ENCODE measurements at regions of chr2 and their contacts with region 1.

Region 1: GRCh38 chr2:16687955-16688354 is 22.3 kb upstream of the CYRIA start:
- DNase-seq: no peak
- ATAC-seq: peak; percentile 76
- H3K4me3 Mint-ChIP-seq: peak overlapping the region; percentile 0
- H3K27ac Mint-ChIP-seq: peak overlapping the region; percentile 60
- H3K4me1 Mint-ChIP-seq: peaks cover 23% of the 10 kb centered on the region
- H3K27me3 Mint-ChIP-seq: no peaks in the 10 kb centered on the region
- CTCF ChIP-seq: no peak

Region 2: GRCh38 chr2:16591370-16591933 is 96.5 kb before region 1 on chr2:
- CTCF ChIA-PET with region 1: no interaction called
- POLR2A ChIA-PET with region 1: no interaction called
- intact Hi-C with region 1: no loop called
- DNase-seq: no peak
- ATAC-seq: peak; percentile 21
- H3K4me3 Mint-ChIP-seq: no peak overlapping the region
- H3K27ac Mint-ChIP-seq: no peak overlapping the region
- H3K4me1 Mint-ChIP-seq: peaks cover 15% of the 10 kb centered on the region
- H3K27me3 Mint-ChIP-seq: no peaks in the 10 kb centered on the region
- CTCF ChIP-seq: no peak

Region 3: DNA sequence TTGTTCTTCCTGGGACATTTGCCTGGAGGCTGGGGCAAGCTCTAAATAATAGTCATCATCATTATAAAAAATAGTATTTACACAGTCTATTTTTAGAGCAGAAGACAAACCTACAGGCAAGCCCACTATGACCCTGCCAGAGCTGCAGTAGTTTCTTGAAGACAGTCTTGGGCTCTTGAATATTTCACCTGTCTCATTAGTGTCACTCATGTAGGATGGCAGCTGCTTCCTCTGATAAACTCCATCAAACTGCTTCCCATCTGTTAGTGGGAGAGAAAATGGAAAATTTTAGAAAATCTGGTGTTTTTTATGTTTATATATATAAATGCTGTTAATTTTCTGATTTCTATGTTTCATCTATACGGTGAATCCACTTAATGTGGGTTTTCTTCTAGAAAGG is 13.8 kb before region 1 on chr2:
- CTCF ChIA-PET with region 1: no interaction called
- POLR2A ChIA-PET with region 1: no interaction called
- intact Hi-C with region 1: loop called (anchors 2 kb)
- DNase-seq: no peak
- ATAC-seq: no peak
- H3K4me3 Mint-ChIP-seq: no peak overlapping the region
- H3K27ac Mint-ChIP-seq: no peak overlapping the region
- H3K4me1 Mint-ChIP-seq: peaks cover 4% of the 10 kb centered on the region
- H3K27me3 Mint-ChIP-seq: no peaks in the 10 kb centered on the region
- CTCF ChIP-seq: no peak

Region 4: DNA sequence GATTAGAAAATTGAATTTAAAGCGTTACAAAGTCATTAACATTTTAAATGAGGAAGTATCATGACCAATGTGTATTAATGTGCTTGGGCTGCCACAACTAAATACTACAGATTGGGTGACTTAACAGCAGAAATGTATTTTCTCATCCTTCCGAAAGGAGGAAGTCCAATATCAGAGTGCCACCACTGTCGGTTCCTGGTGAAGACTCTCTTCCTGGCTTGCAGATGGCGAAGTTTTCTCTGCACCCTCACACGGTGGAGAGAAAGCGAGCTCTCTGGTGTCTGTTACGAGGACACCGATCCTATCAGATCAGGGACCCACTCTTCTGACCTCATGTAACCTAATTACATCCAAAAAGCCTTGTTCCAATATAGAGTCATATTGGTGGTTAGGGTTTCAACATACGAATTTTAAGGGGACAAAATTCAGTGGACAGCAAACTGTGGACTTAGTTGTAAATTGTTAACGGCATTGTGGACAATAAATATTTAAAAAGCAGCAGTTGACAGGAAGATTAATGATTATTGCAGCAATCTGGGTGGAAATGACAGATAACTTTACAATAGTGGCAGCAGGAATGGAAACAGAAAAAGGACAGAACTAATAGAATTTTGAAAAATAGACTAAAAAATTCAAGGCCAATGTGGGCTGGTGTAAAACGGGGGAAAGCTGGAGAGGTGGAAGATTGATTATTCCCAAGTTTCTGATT is 12.8 kb after region 1 on chr2:
- CTCF ChIA-PET with region 1: no interaction called
- POLR2A ChIA-PET with region 1: no interaction called
- intact Hi-C with region 1: loop called (anchors 1 kb)
- DNase-seq: no peak
- ATAC-seq: no peak
- H3K4me3 Mint-ChIP-seq: no peak overlapping the region
- H3K27ac Mint-ChIP-seq: no peak overlapping the region
- H3K4me1 Mint-ChIP-seq: no peaks in the 10 kb centered on the region
- H3K27me3 Mint-ChIP-seq: no peaks in the 10 kb centered on the region
- CTCF ChIP-seq: no peak

Region 5: DNA sequence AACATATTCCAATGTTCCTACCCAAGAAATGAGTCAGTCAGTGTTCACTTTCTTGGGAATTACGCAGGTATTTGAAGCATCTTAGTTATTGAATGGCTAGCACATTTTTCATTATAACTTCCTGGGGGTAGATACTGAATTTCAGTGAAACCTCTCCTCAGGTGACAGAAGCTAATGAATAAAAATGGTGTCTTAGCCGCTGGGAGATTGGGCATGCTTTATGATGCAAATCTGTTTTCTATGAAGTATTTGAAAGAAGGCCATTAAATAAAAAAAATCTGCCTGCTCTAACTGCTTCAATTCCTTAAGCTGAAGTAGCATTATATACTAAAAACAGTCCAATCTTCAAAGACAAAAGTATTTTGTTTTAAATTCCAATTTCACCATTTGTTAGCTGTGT is 110.5 kb after region 1 on chr2:
- CTCF ChIA-PET with region 1: no interaction called
- POLR2A ChIA-PET with region 1: no interaction called
- intact Hi-C with region 1: no loop called
- DNase-seq: no peak
- ATAC-seq: no peak
- H3K4me3 Mint-ChIP-seq: no peak overlapping the region
- H3K27ac Mint-ChIP-seq: no peak overlapping the region
- H3K4me1 Mint-ChIP-seq: no peaks in the 10 kb centered on the region
- H3K27me3 Mint-ChIP-seq: peaks cover 4% of the 10 kb centered on the region
- CTCF ChIP-seq: no peak

Region 6: DNA sequence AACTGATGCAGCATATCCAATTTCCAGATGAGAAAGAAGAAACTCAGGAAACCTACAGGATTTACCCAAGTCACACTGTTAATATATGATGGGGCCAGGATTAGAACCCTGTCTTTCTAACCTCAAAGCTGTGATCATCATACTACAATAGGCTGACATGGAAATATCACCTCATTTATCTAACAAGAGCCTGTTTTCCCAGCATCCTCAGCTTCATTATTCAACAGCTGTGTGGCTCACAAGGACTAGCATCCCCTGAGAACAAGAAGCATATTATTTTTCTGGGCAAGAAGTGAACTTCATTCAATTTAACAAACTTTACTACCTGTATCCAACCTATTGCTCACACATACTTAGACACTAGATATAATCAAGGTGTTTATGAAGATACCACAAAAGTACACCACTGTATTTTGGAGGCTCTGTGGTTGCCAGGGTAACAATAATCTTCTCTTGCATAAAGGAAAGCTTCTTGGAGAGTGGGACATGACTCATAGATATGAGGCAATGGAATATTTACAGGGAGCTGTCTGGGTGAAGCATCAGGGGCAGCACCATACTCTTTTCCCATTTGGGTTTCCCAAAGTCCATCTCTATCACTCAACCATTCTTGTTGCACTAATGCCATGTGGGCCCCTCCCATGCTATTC is 612.1 kb after region 1 on chr2:
- CTCF ChIA-PET with region 1: no interaction called
- POLR2A ChIA-PET with region 1: no interaction called
- intact Hi-C with region 1: no loop called
- DNase-seq: no peak
- ATAC-seq: no peak
- H3K4me3 Mint-ChIP-seq: no peak overlapping the region
- H3K27ac Mint-ChIP-seq: no peak overlapping the region
- H3K4me1 Mint-ChIP-seq: no peaks in the 10 kb centered on the region
- H3K27me3 Mint-ChIP-seq: peaks cover 2% of the 10 kb centered on the region
- CTCF ChIP-seq: no peak